ENCODE measurements at regions of chr20 and their contacts with region 1.

Region 1: DNA sequence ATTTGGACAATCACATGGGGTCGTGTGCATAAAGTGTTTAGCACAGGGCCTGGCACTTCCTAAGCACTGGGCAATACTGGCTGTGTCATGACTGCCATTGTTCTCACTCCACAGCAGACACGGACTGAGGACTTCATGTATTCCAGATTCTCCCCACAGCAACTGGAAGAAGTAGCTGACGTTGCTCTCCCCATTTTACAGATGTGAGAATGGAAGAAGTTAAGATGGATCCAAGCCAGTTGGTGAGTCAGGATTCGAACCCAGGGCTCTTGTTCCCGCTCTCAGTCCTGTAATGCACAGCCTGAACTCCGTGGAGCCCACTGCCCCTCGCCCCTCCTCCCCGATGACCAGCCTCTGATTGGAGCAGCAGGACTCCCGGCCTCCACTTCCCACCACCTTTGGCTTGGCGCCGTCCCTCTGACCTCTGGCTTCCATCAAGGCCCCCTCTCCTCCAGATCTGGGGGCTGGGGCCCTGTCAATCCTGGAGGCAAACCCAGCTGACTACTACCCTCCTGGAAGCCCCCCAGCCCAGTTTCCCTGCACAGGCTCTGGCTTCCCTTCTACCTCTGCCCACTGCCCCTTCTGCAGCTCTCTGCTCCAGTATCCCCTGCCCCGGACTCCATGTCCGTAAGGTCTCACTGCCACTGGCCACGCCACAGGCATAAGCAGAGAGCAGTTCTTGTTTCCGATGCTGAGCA is 12.7 kb downstream of the NOL4L start:
- DNase-seq: no peak
- H3K4me3 ChIP-seq: no peak overlapping the region
- H3K27ac ChIP-seq: no peak overlapping the region
- H3K4me1 ChIP-seq: no peaks in the 10 kb centered on the region
- H3K27me3 ChIP-seq: no peaks in the 10 kb centered on the region
- CTCF ChIP-seq: no peak
- POLR2A ChIP-seq: no peak

Region 2: DNA sequence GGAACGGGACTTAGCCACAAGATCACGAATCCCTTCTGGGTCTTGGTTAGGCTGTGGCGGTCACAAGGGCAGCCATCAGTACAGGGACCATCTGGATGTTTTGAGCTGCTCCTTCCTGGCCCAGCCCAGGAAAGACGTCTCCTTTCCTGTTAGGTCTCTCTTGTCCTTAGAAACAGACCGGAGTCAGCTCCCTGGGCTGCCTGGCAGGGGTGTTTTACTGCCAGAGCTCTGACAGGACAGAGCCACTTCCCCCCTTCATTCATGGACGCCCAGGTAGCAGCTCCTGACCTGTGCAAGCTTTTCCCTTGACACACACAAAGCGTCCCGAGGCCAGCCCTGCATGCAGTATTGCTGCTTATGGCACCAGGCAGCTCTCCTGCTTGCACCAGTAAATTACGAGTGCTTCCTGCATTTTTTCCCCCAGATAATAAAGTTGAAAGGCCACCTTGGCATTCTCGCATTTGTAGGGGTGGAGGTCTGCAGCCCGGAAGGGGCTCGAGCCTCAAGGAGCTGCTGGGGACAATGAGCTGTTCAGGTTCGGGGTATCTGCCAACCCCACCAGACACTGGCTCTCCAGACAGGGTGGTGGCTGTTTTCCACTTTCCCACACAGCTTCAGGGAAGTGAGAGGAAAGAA is 74.7 kb before region 1 on chr20:
- intact Hi-C with region 1: no loop called
- DNase-seq: no peak
- H3K4me3 ChIP-seq: no peak overlapping the region
- H3K27ac ChIP-seq: no peak overlapping the region
- H3K4me1 ChIP-seq: no peaks in the 10 kb centered on the region
- H3K27me3 ChIP-seq: no peaks in the 10 kb centered on the region
- CTCF ChIP-seq: no peak
- POLR2A ChIP-seq: no peak

Region 3: DNA sequence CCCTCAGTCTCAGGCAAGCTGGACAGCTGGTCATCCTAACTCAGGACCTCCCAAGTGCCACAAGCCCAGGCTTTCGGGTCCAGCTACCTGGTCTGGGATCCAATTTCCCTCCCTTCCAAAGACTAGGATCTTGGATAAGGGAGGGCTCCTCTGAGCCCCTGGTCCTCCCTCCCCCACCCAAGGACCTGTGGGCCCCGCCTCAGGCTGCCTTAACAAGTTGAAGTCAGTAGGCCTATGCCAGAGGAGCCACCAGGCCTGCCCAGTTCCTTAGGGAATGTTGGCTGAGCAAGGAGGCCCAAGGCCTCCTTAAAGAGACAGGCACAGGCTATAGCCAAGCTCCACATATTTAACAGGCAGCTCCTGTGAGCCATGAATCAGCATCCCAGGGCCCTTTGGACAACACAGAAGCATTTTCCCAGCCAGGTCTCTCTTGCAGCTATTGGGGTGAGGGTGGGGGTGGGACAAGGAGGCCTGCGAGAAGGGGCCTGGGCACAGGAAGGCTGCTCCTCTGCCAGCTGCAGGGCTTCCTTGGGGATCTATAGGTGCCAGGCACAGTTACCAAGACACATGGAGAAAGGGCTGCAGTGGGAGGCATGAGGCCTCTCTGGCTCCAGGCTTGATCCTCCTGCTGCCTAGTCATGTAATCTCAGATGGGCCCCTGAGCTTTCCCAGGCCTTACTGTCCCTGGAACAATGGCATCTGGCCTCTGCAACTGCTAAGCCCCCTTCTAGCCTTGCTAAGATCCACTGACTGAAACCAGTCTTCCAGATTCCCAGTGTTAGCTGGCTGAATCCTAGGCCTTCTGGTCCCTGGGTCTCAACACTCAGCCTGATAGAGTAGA is 40.2 kb after region 1 on chr20:
- intact Hi-C with region 1: loop called (anchors 1 kb)
- DNase-seq: no peak
- H3K4me3 ChIP-seq: no peak overlapping the region
- H3K27ac ChIP-seq: no peak overlapping the region
- H3K4me1 ChIP-seq: no peaks in the 10 kb centered on the region
- H3K27me3 ChIP-seq: no peaks in the 10 kb centered on the region
- CTCF ChIP-seq: no peak
- POLR2A ChIP-seq: no peak

Region 4: GRCh38 chr20:32626859-32627636 is 54.6 kb after region 1 on chr20:
- intact Hi-C with region 1: no loop called
- DNase-seq: no peak
- H3K4me3 ChIP-seq: peak overlapping the region in 1 of 3 donors; percentile 28
- H3K27ac ChIP-seq: no peak overlapping the region
- H3K4me1 ChIP-seq: peaks cover 0 to 4% of the 10 kb centered on the region in 2 donors
- H3K27me3 ChIP-seq: peaks cover 0 to 12% of the 10 kb centered on the region in 2 donors
- CTCF ChIP-seq: no peak
- POLR2A ChIP-seq: no peak

Region 5: GRCh38 chr20:32999603-33000250 is 427.3 kb after region 1 on chr20:
- intact Hi-C with region 1: no loop called
- DNase-seq: no peak
- H3K4me3 ChIP-seq: no peak overlapping the region
- H3K27ac ChIP-seq: no peak overlapping the region
- H3K4me1 ChIP-seq: no peaks in the 10 kb centered on the region
- H3K27me3 ChIP-seq: no peaks in the 10 kb centered on the region
- CTCF ChIP-seq: no peak
- POLR2A ChIP-seq: no peak

Measured in breast epithelium (tissue), 4 donors.